CD8-positive, alpha-beta T cell (primary cell): ENCODE measurements at regions of chr1 and their contacts with region 1.

Region 1: DNA sequence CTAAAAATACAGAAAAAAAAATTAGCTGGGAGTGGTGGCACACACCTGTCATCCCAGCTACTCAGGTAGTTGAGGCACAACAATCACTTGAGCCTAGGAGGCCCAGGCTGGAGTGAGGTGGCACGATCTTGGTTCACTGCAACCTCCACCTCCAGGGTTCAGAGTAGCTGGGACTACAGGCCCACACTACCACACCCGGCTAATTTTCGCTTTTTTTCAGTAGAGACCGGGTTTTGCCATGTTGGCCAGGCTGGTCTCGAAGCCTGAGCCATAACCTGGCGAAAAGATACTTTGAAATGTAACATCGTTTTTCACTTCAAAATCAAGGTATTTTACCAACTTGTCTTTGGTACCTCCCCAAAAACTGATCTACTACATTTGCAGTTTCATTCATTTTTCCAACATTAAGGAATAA is 6.1 kb downstream of the GAS5 start:
- DNase-seq: peak in 1 of 9 experiments; percentile 14
- ATAC-seq: no peak
- H3K4me3 ChIP-seq: no peak overlapping the region
- H3K4me3 Mint-ChIP-seq: no peak overlapping the region
- H3K27ac ChIP-seq: no peak overlapping the region
- H3K27ac Mint-ChIP-seq: peak overlapping the region; percentile 34
- H3K4me1 ChIP-seq: peaks cover 27% of the 10 kb centered on the region
- H3K4me1 Mint-ChIP-seq: peaks cover 34% of the 10 kb centered on the region
- H3K27me3 ChIP-seq: no peaks in the 10 kb centered on the region
- H3K27me3 Mint-ChIP-seq: no peaks in the 10 kb centered on the region
- CTCF ChIP-seq: no peak

Region 2: DNA sequence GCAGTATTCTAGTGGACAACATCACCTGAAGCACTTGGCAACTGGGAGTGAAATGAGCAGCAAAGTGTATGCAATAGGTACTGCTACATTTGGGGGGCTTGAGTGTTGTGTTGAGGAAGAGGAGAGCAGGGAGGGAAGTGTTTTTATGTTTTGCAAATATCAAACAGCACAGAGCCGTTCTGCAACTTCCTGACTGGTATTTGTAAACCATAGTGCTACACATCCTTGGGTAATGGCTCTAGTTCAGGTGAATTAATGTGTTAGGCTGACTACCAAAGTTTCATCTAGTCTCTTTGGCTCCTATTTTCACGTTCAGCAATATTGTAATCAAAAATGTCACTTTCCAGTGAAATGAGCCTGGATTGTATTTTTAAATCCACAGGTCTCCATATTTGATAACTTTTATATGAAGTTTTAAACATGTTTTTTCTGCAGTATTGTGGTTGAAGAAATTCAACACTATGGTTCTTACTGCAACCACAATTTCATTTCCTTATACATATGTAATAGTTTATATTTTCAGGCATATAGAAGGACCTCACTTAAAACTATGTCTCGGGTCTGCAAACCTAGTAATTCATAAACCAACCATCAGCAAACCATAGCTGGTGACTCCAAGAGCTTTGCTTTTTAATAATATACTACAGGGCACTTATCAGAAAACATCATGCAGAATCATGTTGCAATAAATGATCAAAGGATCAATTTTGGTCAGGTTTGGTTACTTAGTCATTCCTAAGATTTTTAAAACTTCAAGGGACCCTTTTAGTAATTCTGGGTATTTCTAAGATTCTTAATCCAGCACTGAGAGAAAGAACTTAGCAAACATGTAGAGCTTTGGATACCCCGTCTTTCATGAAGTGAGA is 25.2 kb after region 1 on chr1:
- CTCF ChIA-PET with region 1: no interaction called
- POLR2A ChIA-PET with region 1: no interaction called
- intact Hi-C with region 1: no loop called
- DNase-seq: peak in 1 of 9 experiments; percentile 28
- ATAC-seq: no peak
- H3K4me3 ChIP-seq: no peak overlapping the region
- H3K4me3 Mint-ChIP-seq: no peak overlapping the region
- H3K27ac ChIP-seq: peak overlapping the region in 1 of 2 experiments; percentile 64
- H3K27ac Mint-ChIP-seq: peak overlapping the region; percentile 23
- H3K4me1 ChIP-seq: peaks cover 16% of the 10 kb centered on the region
- H3K4me1 Mint-ChIP-seq: peaks cover 38% of the 10 kb centered on the region
- H3K27me3 ChIP-seq: no peaks in the 10 kb centered on the region
- H3K27me3 Mint-ChIP-seq: no peaks in the 10 kb centered on the region
- CTCF ChIP-seq: no peak

Region 3: GRCh38 chr1:173937062-173937461 is 75.3 kb after region 1 on chr1:
- CTCF ChIA-PET with region 1: no interaction called
- POLR2A ChIA-PET with region 1: no interaction called
- intact Hi-C with region 1: loop called in 1 of 2 experiments (anchors 2 kb)
- DNase-seq: no peak
- ATAC-seq: no peak
- H3K4me3 ChIP-seq: no peak overlapping the region
- H3K4me3 Mint-ChIP-seq: no peak overlapping the region
- H3K27ac ChIP-seq: no peak overlapping the region
- H3K27ac Mint-ChIP-seq: no peak overlapping the region
- H3K4me1 ChIP-seq: no peaks in the 10 kb centered on the region
- H3K4me1 Mint-ChIP-seq: no peaks in the 10 kb centered on the region
- H3K27me3 ChIP-seq: no peaks in the 10 kb centered on the region
- H3K27me3 Mint-ChIP-seq: no peaks in the 10 kb centered on the region
- CTCF ChIP-seq: no peak